A673 (cell line): ENCODE measurements at regions of chr11 and their contacts with region 1.

Region 1: DNA sequence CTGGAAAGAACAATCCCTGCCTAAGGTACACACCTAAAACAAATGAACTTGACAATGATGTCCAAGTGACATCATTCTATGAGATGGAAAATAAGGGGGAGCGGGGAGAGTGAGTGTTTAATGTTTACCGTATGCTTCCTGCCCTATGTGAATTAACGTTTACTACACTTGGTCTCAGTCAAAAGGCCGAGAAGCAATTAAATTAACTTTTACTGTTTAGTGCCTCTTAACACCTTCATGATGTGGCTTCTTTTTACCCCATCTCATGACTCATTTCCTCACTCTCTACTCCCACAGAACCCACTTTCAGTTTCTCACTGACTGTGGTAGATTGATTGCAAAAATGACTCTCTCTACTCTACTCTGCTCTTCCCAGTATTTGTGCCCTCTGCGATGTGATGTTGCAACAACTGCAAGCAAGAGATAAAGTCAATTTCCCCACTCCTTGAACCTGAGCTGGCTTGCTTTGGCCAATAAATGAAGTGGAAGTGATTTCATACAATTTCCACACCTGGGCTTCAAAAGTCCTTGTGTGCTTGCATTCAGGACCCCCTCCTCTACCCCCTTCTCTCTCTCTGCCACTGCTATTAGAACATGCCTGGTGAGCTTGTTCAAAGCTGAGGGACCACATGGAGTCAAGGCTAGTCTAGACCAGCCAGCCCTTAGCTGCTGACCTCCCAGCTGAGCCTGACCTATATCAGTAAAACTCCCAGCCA is 11.6 kb upstream of the ALKBH3 start:
- DNase-seq: peak; percentile 88
- H3K4me3 ChIP-seq: no peak overlapping the region
- H3K27ac ChIP-seq: no peak overlapping the region
- H3K4me1 ChIP-seq: no peaks in the 10 kb centered on the region
- H3K27me3 ChIP-seq: peaks cover 33% of the 10 kb centered on the region
- CTCF ChIP-seq: no peak

Region 2: GRCh38 chr11:43708776-43709175 is 160.2 kb before region 1 on chr11:
- CTCF ChIA-PET with region 1: no interaction called
- POLR2A ChIA-PET with region 1: no interaction called
- intact Hi-C with region 1: no loop called
- DNase-seq: no peak
- H3K4me3 ChIP-seq: no peak overlapping the region
- H3K27ac ChIP-seq: no peak overlapping the region
- H3K4me1 ChIP-seq: peaks cover 8% of the 10 kb centered on the region
- H3K27me3 ChIP-seq: no peaks in the 10 kb centered on the region
- CTCF ChIP-seq: peak; percentile 50

Region 3: GRCh38 chr11:43747130-43747802 is 121.7 kb before region 1 on chr11:
- CTCF ChIA-PET with region 1: no interaction called
- POLR2A ChIA-PET with region 1: no interaction called
- intact Hi-C with region 1: no loop called
- DNase-seq: no peak
- H3K4me3 ChIP-seq: no peak overlapping the region
- H3K27ac ChIP-seq: no peak overlapping the region
- H3K4me1 ChIP-seq: no peaks in the 10 kb centered on the region
- H3K27me3 ChIP-seq: no peaks in the 10 kb centered on the region
- CTCF ChIP-seq: no peak

Region 4: DNA sequence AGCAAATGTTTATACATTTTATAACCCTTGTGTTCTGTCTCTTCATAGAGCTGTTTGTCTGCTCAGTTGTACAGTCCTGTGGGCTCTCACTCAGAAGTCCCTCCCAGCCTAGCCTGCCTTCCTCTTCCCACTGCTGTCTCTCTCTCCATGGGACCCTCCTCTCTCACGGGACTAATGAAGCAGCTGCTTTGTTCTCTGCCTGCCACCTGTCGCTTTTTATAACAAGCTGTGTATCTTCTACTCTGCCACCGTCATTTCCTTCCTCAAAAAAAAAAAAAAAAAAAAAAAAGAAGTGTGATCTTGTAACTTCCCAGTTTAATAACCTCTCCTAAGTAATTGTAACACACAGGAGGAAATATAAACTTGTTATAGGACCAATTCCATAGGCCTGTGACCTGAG is 80.6 kb before region 1 on chr11:
- CTCF ChIA-PET with region 1: no interaction called
- POLR2A ChIA-PET with region 1: interaction called, 13 read pairs
- intact Hi-C with region 1: no loop called
- DNase-seq: peak; percentile 78
- H3K4me3 ChIP-seq: no peak overlapping the region
- H3K27ac ChIP-seq: peak overlapping the region; percentile 5
- H3K4me1 ChIP-seq: peaks cover 11% of the 10 kb centered on the region
- H3K27me3 ChIP-seq: no peaks in the 10 kb centered on the region
- CTCF ChIP-seq: no peak